ENCODE measurements at regions of chr22 and their contacts with region 1.

Region 1: GRCh38 chr22:42511401-42511891 is 8.2 kb downstream of the RRP7A start:
- DNase-seq: no peak
- ATAC-seq: no peak
- H3K4me3 Mint-ChIP-seq: no peak overlapping the region
- H3K27ac Mint-ChIP-seq: peak overlapping the region; percentile 48
- H3K4me1 Mint-ChIP-seq: peaks cover 43% of the 10 kb centered on the region
- H3K27me3 Mint-ChIP-seq: no peaks in the 10 kb centered on the region
- CTCF ChIP-seq: no peak

Region 2: GRCh38 chr22:42484506-42484905 is 26.9 kb before region 1 on chr22:
- CTCF ChIA-PET with region 1: no interaction called
- POLR2A ChIA-PET with region 1: no interaction called
- DNase-seq: no peak
- ATAC-seq: no peak
- H3K4me3 Mint-ChIP-seq: no peak overlapping the region
- H3K27ac Mint-ChIP-seq: no peak overlapping the region
- H3K4me1 Mint-ChIP-seq: no peaks in the 10 kb centered on the region
- H3K27me3 Mint-ChIP-seq: peaks cover 19% of the 10 kb centered on the region
- CTCF ChIP-seq: no peak

Region 3: GRCh38 chr22:42553475-42554361 is 42.3 kb after region 1 on chr22 and contains the start of gene SERHL2:
- CTCF ChIA-PET with region 1: interaction called, 11 read pairs
- POLR2A ChIA-PET with region 1: no interaction called
- DNase-seq: peak; percentile 97
- ATAC-seq: peak; percentile 97
- H3K4me3 Mint-ChIP-seq: peak within 1 kb of the TSS; percentile 85
- H3K27ac Mint-ChIP-seq: no peak within 1 kb of the TSS
- H3K4me1 Mint-ChIP-seq: peaks cover 20% of the 10 kb centered on the region
- H3K27me3 Mint-ChIP-seq: peaks cover 52% of the 10 kb centered on the region
- CTCF ChIP-seq: no peak
- total RNA-seq, gene SERHL2: 0.37 to 1.1 TPM (median 0.92 TPM) in 3 replicates

Region 4: GRCh38 chr22:42560781-42561180 is 49.3 kb after region 1 on chr22:
- CTCF ChIA-PET with region 1: interaction called, 15 read pairs
- POLR2A ChIA-PET with region 1: no interaction called
- DNase-seq: peak; percentile 45
- ATAC-seq: peak; percentile 79
- H3K4me3 Mint-ChIP-seq: no peak overlapping the region
- H3K27ac Mint-ChIP-seq: no peak overlapping the region
- H3K4me1 Mint-ChIP-seq: peaks cover 8% of the 10 kb centered on the region
- H3K27me3 Mint-ChIP-seq: peaks cover 45% of the 10 kb centered on the region
- CTCF ChIP-seq: peak; percentile 70